ENCODE measurements at regions of chr22 and their contacts with region 1.

Region 1: DNA sequence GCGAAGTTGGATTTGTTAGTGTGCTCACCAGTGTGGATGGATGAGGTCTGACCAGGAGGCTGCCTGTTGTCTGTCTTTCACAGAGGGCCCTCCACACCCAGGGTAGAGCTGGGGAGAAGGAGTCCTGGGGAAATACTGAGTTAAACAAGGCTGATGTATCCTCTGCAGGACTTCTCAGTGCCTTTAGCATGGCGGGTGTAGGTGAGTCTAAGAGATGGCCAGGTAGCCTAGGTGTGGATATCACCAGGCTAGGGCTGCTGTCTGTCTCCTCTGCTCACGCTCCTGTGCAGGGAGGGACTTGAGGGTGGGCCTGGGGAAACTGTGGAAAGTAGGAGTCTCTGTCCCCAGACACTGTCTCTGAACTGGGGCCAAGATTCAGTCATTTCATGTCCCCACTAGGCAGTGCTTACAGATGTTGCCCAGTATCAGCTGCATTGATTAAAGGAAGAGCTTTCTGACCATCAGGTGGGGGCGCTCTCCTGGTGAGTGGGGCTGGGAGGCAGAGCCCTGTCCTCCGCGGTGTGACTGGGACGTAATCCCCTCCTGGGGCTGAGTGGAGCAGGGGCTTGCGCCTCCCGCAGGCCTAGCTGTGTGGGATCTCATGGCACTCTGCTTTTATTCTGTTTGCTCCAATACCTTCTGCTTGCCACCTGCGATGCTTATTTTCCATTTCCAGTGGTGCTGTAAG is 35.5 kb upstream of the CCDC188 start:
- DNase-seq: peak; percentile 61 to 69
- H3K4me3 ChIP-seq: no peak overlapping the region
- H3K27ac ChIP-seq: no peak overlapping the region
- H3K4me1 ChIP-seq: peaks cover 0 to 4% (median 2%) of the 10 kb centered on the region in 4 experiments; a peak in 2 of 7 replicates
- H3K27me3 ChIP-seq: no peaks in the 10 kb centered on the region
- CTCF ChIP-seq: peak; percentile 54 to 73 (median 64)
- EP300 ChIP-seq: no peak
- POLR2A ChIP-seq: no peak
- RAD21 ChIP-seq: peak; percentile 20 to 53

Region 2: DNA sequence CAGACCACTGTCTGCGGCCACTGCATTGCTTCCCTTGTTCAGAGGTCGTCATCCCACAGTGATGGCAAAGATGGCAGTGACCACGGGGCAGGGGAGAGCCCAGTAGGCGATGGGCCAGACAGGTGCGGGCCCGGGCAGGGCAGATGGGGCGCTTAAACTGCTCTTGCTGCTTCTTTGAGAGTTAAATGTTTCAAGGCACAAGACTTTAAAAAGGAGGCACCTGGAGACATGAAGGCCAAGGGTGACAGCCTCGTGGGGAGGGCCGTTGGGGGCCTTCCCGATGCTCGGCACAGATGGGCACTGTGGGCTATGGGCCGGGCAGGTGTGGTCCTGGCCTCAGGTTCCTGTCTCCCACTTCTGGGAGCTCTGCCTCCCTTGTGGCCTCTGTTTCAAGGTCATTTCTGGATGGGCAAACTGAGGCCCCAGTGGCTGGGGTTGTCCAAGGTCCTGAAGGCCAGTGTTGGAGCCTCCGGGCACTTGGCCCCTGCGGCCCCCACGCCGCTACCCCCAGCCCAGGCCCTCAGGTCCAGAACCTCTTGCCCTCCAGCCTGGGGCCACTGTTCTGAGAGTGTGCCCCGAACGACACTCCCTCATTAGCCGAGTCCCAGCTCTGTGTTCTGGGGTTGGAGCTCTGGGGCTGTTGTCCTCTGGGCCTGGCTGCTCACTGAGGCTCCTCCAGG is 18.5 kb before region 1 on chr22:
- CTCF ChIA-PET with region 1: interaction called, 11 read pairs
- POLR2A ChIA-PET with region 1: no interaction called
- DNase-seq: no peak
- H3K4me3 ChIP-seq: no peak overlapping the region
- H3K27ac ChIP-seq: no peak overlapping the region
- H3K4me1 ChIP-seq: no peaks in the 10 kb centered on the region
- H3K27me3 ChIP-seq: no peaks in the 10 kb centered on the region
- CTCF ChIP-seq: no peak
- EP300 ChIP-seq: no peak
- POLR2A ChIP-seq: no peak
- RAD21 ChIP-seq: no peak

Region 3: DNA sequence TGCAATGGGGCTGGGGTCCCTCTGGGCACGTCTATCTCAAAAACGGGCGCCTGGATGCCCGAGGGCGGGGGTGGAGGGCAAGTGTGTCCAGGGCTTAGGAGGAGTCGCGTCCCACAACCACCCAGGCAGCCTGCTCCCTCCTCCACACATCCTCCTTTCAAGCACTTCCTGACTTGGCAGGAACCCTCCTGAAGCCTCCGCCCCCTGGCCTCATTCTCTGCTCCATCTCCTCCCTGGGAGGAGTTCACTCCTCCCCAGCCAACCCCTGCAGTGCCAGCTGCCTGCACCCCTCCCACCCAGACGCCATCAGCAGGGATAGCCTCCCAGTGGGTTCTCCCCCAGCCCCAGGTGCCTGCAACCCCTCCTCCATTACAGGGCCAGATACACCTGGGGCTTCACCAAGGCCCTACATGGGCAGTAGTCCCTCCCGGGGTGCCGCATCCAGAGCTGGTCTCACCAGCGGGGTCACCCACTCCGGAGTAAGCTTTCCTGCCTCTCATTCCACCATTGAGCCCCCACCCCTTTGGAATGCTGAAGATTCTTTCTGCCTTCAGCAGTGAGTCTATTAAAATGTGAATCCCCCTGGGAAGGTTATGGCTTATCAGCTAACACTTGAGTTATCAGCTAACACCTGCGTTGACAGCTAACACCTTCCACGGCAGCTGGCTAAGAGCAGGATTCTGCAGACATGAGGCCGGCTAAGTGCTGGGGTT is 57.4 kb after region 1 on chr22:
- CTCF ChIA-PET with region 1: interaction called, 43 read pairs
- POLR2A ChIA-PET with region 1: no interaction called
- DNase-seq: no peak
- H3K4me3 ChIP-seq: no peak overlapping the region
- H3K27ac ChIP-seq: no peak overlapping the region
- H3K4me1 ChIP-seq: peaks cover 7 to 49% (median 23%) of the 10 kb centered on the region in 4 experiments
- H3K27me3 ChIP-seq: no peaks in the 10 kb centered on the region
- CTCF ChIP-seq: no peak
- EP300 ChIP-seq: no peak
- POLR2A ChIP-seq: no peak
- RAD21 ChIP-seq: no peak

Measured in H1 (cell line).